CD8-positive, alpha-beta memory T cell (primary cell): ENCODE measurements at regions of chr3 and their contacts with region 1.

Region 1: GRCh38 chr3:185677146-185677829 is 91.2 kb downstream of the SENP2 start:
- DNase-seq: no peak
- H3K4me3 ChIP-seq: no peak overlapping the region
- H3K4me3 Mint-ChIP-seq: no peak overlapping the region
- H3K27ac ChIP-seq: no peak overlapping the region
- H3K27ac Mint-ChIP-seq: no peak overlapping the region
- H3K4me1 ChIP-seq: no peaks in the 10 kb centered on the region
- H3K4me1 Mint-ChIP-seq: no peaks in the 10 kb centered on the region
- H3K27me3 ChIP-seq: peaks cover 6% of the 10 kb centered on the region
- H3K27me3 Mint-ChIP-seq: peaks cover 23 to 47% of the 10 kb centered on the region in 2 donors

Region 2: DNA sequence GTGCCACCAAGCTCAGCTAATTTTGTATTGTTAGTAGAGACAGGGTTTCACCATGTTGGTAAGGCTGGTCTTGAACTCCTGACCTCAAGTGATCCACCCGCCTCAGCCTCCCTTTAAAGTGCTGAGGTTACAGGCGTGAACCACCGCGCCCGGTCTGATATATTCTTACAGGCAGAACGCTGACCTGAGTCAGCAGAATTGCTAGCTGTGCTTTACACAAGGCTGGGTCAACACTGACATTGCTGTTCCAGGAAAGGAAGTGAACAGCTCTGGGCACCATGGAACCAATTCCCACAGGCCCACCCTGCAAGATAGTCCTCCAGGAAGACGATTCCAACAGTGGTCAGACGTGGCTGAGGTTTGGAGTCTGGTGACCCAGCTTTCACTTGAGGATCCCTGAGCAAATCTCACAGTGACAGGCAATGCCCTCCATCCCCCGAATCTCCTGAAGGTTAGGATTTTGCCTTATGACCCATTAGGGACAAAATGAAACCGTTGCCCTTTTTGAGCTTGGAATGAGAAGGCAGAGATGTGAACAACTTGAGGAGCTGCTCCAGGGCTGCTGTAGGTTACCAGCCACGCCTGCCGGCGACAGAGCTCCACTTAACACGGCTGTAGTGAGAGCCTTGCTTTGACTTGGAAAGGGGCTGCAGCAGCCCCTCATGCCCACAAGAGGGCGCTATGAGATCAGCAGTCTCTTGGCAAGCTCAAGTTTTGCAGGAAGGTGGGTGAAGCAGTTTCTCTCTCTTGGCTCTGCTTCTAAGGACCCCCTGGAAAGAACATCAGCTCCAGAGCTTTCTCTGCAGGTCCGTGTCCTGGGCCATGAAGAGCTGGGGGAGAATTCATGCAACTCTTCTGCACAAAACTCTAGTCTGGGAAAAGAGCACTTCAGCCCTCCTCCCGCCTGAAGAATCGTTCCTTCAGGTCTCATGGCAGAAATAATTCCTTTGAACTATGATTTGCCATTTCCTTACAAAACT is 17.1 kb before region 1 on chr3:
- CTCF ChIA-PET with region 1: interaction called, 21 read pairs
- POLR2A ChIA-PET with region 1: no interaction called
- DNase-seq: peak; percentile 33 to 56 (median 35)
- H3K4me3 ChIP-seq: no peak overlapping the region
- H3K4me3 Mint-ChIP-seq: peak overlapping the region in 1 of 7 donors; percentile 59
- H3K27ac ChIP-seq: no peak overlapping the region
- H3K27ac Mint-ChIP-seq: peak overlapping the region in 1 of 8 donors; percentile 59
- H3K4me1 ChIP-seq: peaks cover 4% of the 10 kb centered on the region
- H3K4me1 Mint-ChIP-seq: peaks cover 0 to 9% (median 1%) of the 10 kb centered on the region in 3 donors
- H3K27me3 ChIP-seq: no peaks in the 10 kb centered on the region
- H3K27me3 Mint-ChIP-seq: peaks cover 7 to 51% of the 10 kb centered on the region in 2 donors

Region 3: GRCh38 chr3:185687271-185687878 is 10.1 kb after region 1 on chr3:
- CTCF ChIA-PET with region 1: no interaction called
- POLR2A ChIA-PET with region 1: no interaction called
- DNase-seq: no peak
- H3K4me3 ChIP-seq: no peak overlapping the region
- H3K4me3 Mint-ChIP-seq: no peak overlapping the region
- H3K27ac ChIP-seq: no peak overlapping the region
- H3K27ac Mint-ChIP-seq: no peak overlapping the region
- H3K4me1 ChIP-seq: no peaks in the 10 kb centered on the region
- H3K4me1 Mint-ChIP-seq: no peaks in the 10 kb centered on the region
- H3K27me3 ChIP-seq: no peaks in the 10 kb centered on the region
- H3K27me3 Mint-ChIP-seq: peaks cover 17 to 18% of the 10 kb centered on the region in 2 donors